ENCODE measurements at regions of chr4 and their contacts with region 1.

Region 1: GRCh38 chr4:149952716-149953115 is 125.5 kb upstream of the DCLK2 start:
- DNase-seq: no peak
- ATAC-seq: no peak
- H3K4me3 ChIP-seq: no peak overlapping the region
- H3K27ac ChIP-seq: no peak overlapping the region
- H3K4me1 ChIP-seq: no peaks in the 10 kb centered on the region
- H3K27me3 ChIP-seq: no peaks in the 10 kb centered on the region
- CTCF ChIP-seq: no peak

Region 2: DNA sequence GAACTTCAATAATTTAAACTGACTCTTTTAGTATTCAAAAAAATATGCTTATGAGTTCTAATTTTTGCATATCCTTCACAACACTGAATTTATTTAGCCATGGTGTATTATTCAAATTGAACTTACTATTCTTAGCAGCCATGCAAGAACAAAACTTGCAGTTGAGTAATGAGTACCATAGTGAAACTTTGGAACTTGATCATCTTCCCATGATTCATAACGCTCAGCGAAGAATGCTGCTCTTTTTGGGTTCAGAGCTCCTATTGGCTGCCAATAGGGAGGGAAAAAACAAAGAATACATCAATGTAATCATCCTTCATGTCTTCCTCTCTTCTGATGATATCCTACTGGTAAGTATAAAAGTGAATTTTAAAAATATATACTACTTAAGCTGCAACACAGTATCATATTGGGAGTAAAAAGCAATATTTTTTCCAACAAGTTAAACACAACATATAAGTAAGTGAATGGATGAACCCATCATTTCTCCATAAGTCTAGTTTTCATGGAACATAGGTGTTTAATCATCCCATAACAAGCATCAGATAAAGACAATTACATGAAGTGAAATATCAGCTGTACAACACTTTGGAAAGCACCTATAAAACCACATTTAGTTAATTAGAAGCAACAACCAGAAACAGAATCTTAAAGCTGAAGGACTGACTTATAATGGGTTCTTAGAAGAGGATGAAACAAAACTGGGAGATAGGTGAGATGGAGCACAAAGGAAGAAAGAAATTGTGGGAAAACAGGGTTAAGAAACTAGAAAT is 484.1 kb after region 1 on chr4:
- CTCF ChIA-PET with region 1: no interaction called
- POLR2A ChIA-PET with region 1: no interaction called
- in situ Hi-C with region 1: no loop called
- intact Hi-C with region 1: no loop called
- DNase-seq: no peak
- ATAC-seq: no peak
- H3K4me3 ChIP-seq: no peak overlapping the region
- H3K27ac ChIP-seq: no peak overlapping the region
- H3K4me1 ChIP-seq: no peaks in the 10 kb centered on the region
- H3K27me3 ChIP-seq: no peaks in the 10 kb centered on the region
- CTCF ChIP-seq: no peak

Region 3: GRCh38 chr4:150723727-150724411 is 771.2 kb after region 1 on chr4:
- CTCF ChIA-PET with region 1: interaction called, 14 read pairs
- POLR2A ChIA-PET with region 1: no interaction called
- in situ Hi-C with region 1: no loop called
- intact Hi-C with region 1: no loop called
- DNase-seq: no peak
- ATAC-seq: no peak
- H3K4me3 ChIP-seq: no peak overlapping the region
- H3K27ac ChIP-seq: no peak overlapping the region
- H3K4me1 ChIP-seq: no peaks in the 10 kb centered on the region
- H3K27me3 ChIP-seq: no peaks in the 10 kb centered on the region
- CTCF ChIP-seq: no peak